ENCODE measurements at regions of chr17 and their contacts with region 1.

Region 1: DNA sequence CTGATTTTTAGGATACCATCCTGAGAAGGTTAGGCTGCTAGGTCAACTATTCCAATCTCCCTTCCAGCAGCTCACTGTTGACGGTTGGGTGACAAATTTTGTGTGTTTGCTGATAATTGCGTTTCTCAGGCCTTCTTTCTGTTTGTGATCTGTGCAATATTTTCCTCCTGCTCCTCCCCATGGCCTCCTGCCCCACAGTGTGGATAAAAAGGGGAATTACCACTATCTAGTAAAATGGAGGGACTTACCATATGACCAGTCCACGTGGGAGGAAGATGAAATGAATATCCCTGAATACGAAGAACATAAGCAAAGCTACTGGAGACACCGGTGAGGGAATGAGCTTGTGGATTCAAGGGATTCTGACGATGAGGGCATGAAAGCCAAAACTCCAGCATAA is 9.2 kb downstream of the CHD3 start:
- H3K4me3 Mint-ChIP-seq: no peak overlapping the region
- H3K27ac Mint-ChIP-seq: peak overlapping the region; percentile 68
- H3K4me1 Mint-ChIP-seq: peaks cover 23% of the 10 kb centered on the region
- H3K27me3 Mint-ChIP-seq: no peaks in the 10 kb centered on the region

Region 2: DNA sequence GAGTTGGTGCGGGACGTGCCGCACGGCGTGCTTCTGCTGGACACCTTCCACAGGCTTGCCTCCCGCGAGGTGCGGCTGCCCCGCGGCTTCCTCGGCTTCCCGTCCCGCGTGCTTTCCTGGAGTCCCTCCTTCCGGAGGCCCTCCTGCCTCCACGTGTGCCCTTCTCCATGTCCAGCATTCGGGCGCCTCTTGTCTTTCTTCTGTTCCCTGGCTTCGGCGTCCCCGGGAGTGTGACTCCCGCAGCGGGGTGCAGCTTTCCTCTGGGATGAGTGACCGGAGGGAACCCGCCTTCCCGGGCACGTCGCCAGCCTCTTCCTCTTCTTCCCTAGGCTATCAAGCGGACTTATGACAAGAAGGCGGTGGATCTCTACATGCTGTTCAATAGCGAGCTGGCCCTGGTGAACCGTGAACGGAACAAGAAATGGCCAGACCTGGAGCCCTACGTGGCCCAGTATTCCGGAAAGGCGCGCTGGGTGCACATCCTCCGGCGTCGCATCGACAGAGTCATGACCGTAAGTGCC is 157.2 kb before region 1 on chr17:
- intact Hi-C with region 1: loop called (anchors 5 kb)
- H3K4me3 Mint-ChIP-seq: no peak overlapping the region
- H3K27ac Mint-ChIP-seq: no peak overlapping the region
- H3K4me1 Mint-ChIP-seq: peaks cover 5% of the 10 kb centered on the region
- H3K27me3 Mint-ChIP-seq: peaks cover 32% of the 10 kb centered on the region

Region 3: GRCh38 chr17:7823581-7824397 is 74.0 kb before region 1 on chr17:
- intact Hi-C with region 1: loop called (anchors 2 kb)
- H3K4me3 Mint-ChIP-seq: no peak overlapping the region
- H3K27ac Mint-ChIP-seq: no peak overlapping the region
- H3K4me1 Mint-ChIP-seq: peaks cover 10% of the 10 kb centered on the region
- H3K27me3 Mint-ChIP-seq: peaks cover 29% of the 10 kb centered on the region

Region 4: DNA sequence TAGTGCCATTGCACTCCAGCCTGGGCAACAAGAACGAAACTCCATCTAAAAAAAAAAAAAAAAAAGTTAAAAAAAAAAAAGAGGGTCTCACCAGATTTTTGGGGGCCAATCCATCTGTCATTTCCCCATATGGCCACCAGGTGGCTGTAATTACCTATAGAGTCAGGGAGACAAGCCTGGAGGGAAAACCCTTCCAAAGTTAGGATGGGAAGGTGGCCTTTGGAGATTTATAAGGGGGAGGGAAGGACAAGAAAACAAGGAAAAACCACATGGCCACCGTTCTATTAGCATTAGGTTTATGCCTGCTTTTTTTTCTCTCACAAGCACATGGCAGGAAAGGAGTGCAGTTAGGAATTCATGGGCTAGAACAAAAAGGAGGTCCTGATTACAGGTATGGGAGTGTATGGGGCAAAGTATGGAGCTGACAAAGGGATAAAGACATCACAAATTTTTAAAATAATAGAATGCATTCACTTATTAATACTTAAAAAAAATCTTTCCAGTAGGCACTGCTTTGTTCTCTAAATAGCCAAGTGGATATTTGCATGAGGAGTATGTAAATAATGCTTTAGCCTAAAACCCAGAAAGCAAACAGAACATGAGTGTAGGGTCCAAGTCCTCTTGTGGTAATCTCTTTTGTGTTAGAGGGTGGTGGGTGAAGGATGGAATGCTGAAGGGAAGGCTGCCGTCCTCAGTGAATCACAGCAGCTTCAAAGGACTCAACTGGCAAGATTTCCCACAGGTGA is 34.9 kb before region 1 on chr17:
- intact Hi-C with region 1: loop called (anchors 1 kb)
- H3K4me3 Mint-ChIP-seq: no peak overlapping the region
- H3K27ac Mint-ChIP-seq: no peak overlapping the region
- H3K4me1 Mint-ChIP-seq: peaks cover 19% of the 10 kb centered on the region
- H3K27me3 Mint-ChIP-seq: no peaks in the 10 kb centered on the region